WTC11 (cell line): ENCODE measurements at regions of chr20 and their contacts with region 1.

Region 1: DNA sequence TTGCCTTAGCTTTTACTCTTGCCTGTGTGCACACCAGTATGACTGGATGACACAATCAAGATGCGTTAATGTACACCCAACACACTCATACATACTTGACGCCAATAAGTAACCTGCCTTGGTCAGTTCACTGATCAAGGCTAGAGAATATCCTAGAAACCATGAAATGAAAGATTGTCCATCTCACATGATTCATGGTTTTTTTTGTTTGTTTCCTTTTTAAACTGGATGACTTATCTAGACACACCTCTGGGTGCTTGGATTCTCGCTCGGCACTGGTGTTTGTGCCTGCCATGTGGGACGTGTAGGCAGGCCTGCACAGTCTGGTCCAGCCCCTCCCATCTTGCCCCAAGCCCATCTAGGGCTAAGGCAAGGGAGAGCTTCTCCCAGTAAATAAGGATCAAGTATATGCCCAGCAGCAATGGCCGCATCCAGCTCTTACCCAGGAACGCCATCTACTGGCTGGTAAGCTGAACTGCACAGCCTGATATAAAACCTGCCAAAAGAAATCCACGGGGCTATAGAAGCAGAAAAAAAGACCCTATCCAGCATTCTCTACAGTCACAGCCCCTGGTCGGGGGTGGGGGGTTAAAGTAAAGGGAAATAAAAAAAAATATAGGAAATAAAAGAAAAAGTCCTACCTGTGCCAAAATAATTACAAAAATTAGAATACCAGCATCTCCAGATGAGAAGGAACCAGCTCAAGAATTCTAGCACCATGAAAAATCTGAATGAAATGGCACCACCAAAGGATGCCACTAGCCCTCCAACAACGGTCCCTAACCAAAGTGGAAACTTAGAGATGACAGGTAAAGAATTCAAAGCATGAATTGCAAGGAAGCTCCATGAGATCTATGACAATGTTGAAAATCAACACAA is 73.3 kb downstream of the OTOR start:
- DNase-seq: peak; percentile 32
- ATAC-seq: peak; percentile 99
- H3K4me3 Mint-ChIP-seq: no peak overlapping the region
- H3K27ac Mint-ChIP-seq: no peak overlapping the region
- H3K4me1 Mint-ChIP-seq: no peaks in the 10 kb centered on the region
- H3K27me3 Mint-ChIP-seq: no peaks in the 10 kb centered on the region
- CTCF ChIP-seq: peak; percentile 86

Region 2: DNA sequence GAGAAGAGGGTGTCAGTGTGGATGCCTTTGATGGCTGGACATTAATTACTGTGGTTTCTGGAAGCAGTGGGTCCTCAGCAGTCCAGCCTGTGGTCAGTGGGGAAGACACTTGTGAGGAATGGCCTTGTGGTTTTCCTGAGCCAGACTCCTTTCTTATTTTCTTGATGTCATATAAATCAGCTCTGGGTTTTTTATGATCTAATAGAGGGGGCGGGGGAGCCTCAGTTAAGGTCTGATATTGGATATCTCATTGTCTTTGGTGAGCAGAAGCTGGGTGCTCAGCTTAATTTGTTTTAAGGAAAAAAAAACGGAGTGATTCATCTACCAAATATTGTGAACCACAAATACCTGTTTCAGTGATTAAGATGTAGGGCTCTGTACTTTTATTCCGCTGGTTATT is 11.2 kb before region 1 on chr20:
- CTCF ChIA-PET with region 1: interaction called, 90 read pairs
- POLR2A ChIA-PET with region 1: no interaction called
- DNase-seq: no peak
- ATAC-seq: no peak
- H3K4me3 Mint-ChIP-seq: no peak overlapping the region
- H3K27ac Mint-ChIP-seq: no peak overlapping the region
- H3K4me1 Mint-ChIP-seq: peaks cover under 1% of the 10 kb centered on the region
- H3K27me3 Mint-ChIP-seq: no peaks in the 10 kb centered on the region
- CTCF ChIP-seq: no peak

Region 3: DNA sequence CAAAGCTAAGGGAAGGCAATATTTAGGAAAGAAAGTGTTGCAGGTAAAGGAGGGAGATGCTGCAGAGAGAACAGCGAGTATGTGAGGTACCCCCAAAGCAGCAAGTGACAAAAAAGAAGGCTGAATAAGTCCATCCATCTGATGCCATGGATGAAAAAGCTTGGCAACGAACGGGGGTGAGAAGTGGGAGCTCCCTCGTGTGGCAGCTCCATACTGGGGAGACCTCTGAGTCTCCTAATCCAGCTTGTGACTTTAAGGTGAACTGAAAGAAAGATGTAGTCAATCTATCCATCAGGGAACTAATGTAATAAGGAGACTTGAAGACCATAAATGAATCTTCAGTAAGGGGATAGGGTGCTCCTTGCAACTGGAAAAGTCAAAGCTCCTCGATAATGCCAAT is 83.3 kb after region 1 on chr20:
- CTCF ChIA-PET with region 1: interaction called, 10 read pairs
- POLR2A ChIA-PET with region 1: no interaction called
- DNase-seq: no peak
- ATAC-seq: peak; percentile 48; the same call in 1 of the 2 replicates
- H3K4me3 Mint-ChIP-seq: no peak overlapping the region
- H3K27ac Mint-ChIP-seq: no peak overlapping the region
- H3K4me1 Mint-ChIP-seq: no peaks in the 10 kb centered on the region
- H3K27me3 Mint-ChIP-seq: no peaks in the 10 kb centered on the region
- CTCF ChIP-seq: no peak

Region 4: GRCh38 chr20:16922834-16923233 is 101.4 kb after region 1 on chr20:
- CTCF ChIA-PET with region 1: no interaction called
- POLR2A ChIA-PET with region 1: no interaction called
- DNase-seq: no peak
- ATAC-seq: no peak
- H3K4me3 Mint-ChIP-seq: no peak overlapping the region
- H3K27ac Mint-ChIP-seq: no peak overlapping the region
- H3K4me1 Mint-ChIP-seq: peaks cover 15% of the 10 kb centered on the region
- H3K27me3 Mint-ChIP-seq: no peaks in the 10 kb centered on the region
- CTCF ChIP-seq: no peak